ENCODE measurements at regions of chr10 and their contacts with region 1.

Region 1: DNA sequence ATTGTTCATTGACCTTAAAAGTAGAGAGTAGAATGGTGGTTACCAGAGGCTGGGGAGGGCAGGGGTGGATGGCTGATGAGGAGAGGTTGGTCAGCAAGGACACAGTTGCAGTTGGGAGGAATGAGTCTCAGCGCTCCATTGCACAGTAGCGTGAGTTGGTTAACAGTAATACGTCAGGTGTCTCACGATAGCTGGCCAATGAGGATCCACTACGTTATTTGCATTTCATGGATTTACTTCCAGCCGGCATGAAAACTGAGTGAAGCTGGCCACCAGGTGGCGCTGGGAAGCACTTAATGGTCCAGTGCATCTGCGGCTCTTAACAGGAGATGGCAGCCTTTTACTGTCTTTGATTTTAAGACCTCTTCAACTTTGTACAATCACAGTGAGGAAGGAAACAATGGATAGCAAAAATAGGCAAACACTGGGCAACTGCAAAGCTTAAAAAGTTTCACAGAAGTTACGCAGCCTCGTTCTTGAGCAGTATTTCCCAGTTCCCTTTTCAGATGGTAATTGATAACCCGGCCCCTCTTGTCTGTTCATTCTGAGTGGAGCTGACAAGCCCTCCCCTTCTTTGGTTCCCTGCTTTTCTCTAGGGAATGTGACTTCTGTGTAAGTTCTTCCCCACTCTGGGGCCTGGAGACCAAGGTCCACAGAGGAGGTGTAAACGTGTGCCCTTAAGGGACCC is 23.7 kb downstream of the AKR1E2 start:
- DNase-seq: peak; percentile 90
- H3K4me3 ChIP-seq: peak overlapping the region; percentile 34
- H3K27ac ChIP-seq: peak overlapping the region; percentile 57
- H3K4me1 ChIP-seq: peaks cover 47% of the 10 kb centered on the region
- H3K27me3 ChIP-seq: no peaks in the 10 kb centered on the region
- CTCF ChIP-seq: peak; percentile 99

Region 2: GRCh38 chr10:4767033-4767814 is 82.5 kb before region 1 on chr10:
- intact Hi-C with region 1: no loop called
- DNase-seq: no peak
- H3K4me3 ChIP-seq: no peak overlapping the region
- H3K27ac ChIP-seq: peak overlapping the region; percentile 78
- H3K4me1 ChIP-seq: peaks cover 58% of the 10 kb centered on the region
- H3K27me3 ChIP-seq: no peaks in the 10 kb centered on the region
- CTCF ChIP-seq: peak; percentile 89

Region 3: DNA sequence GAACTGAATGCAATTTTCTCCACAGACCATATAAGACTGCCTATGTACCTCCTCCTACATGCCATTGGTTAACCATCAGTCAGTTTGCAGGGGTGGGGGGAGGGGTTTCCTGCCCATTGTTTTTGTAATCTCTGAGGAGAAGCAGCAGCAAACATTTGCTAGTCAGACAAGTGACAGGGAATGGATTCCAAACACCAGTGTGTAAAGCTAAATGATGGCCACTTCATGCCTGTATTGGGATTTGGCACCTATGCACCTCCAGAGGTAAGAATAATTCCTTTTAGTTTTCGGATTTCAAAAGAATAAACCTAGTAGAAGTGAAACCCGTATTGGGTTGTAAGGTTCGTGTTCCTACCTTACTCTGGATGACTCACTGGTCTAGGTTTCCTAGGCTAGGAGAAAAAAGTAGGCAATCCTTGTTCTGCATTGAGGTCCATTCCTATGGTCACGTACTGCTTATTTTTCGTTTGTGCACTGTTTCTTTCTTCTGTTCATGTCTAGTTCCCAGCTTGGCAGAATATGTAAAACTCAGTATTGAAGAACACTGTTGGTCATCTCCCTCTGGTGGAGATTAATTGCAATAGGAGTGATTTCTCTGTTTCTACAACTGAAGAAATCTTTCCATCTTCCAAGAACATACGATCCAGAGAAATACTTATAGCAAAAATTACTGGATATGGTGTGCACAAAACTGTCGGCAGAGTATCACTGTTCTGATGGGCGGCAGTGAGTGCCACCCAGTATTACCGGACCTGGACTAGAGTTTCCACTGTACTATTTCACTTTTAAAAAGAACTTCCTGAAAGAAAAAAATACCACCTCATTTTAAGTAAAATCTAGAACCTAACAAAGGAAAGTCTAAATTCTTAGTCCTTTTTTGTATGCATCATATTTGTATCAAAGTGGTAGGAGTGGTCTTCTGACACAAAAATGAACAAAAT is 244.8 kb after region 1 on chr10 and contains the start of gene AKR1C3:
- intact Hi-C with region 1: loop called (anchors 2 kb)
- DNase-seq: no peak
- H3K4me3 ChIP-seq: peak within 1 kb of the TSS; percentile 72
- H3K27ac ChIP-seq: peak within 1 kb of the TSS; percentile 83
- H3K4me1 ChIP-seq: peaks cover 18% of the 10 kb centered on the region
- H3K27me3 ChIP-seq: no peaks in the 10 kb centered on the region
- CTCF ChIP-seq: peak; percentile 85
- total RNA-seq, gene AKR1C3: 27.1 TPM

Region 4: DNA sequence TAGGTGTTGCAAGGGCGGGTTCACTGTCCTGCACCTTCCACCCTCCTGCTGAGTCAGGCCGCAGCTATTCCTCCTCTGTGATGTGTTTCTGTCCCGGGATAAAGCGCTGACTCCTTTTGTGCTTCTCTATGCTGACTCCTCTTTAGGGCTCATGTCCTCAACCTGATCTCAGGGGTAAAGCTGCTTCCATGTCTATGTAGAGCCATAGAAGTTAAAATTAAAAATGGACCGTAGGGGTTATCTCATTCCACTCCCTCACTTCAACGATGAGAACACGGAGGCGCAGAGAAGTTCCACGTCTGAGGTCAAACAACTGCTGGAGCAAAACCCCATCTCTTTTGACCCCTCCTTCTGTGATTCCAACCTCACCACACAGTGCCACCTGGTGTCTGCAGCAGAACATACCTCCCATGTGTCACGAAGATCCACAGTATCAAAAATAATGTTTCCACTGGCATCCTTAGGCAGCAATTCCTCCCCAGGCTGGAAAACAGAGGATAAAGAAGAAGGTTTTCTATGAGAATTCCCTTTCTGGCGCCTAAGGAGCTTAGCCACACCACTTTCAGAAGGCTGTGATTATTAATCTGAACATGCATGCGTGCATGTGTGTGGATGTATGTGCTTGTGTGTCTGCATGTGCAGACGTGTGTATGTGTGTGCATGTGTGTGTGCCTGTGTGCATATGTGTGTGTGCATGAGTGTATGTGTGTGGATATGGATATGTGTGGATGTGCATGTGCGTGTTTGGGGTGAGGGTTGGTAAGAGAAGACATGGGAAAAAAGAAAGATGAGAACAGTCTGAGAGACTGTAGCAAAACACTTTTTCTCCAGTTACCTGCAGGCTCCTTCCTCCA is 433.8 kb after region 1 on chr10:
- intact Hi-C with region 1: loop called (anchors 10 kb)
- DNase-seq: peak; percentile 58
- H3K4me3 ChIP-seq: no peak overlapping the region
- H3K27ac ChIP-seq: no peak overlapping the region
- H3K4me1 ChIP-seq: peaks cover 4% of the 10 kb centered on the region
- H3K27me3 ChIP-seq: peaks cover 20% of the 10 kb centered on the region
- CTCF ChIP-seq: peak; percentile 81

Measured in left ventricle myocardium inferior (tissue), 1 donor.